ENCODE measurements at regions of chr5 and their contacts with region 1.

Region 1: GRCh38 chr5:150458819-150459557 is 9.4 kb upstream of the RPS14 start:
- DNase-seq: peak; percentile 76
- H3K4me3 Mint-ChIP-seq: no peak overlapping the region
- H3K27ac Mint-ChIP-seq: peak overlapping the region; percentile 57
- H3K4me1 Mint-ChIP-seq: peaks cover 13% of the 10 kb centered on the region
- H3K27me3 Mint-ChIP-seq: no peaks in the 10 kb centered on the region
- CTCF ChIP-seq: peak; percentile 98

Region 2: GRCh38 chr5:150497274-150497988 is 38.4 kb after region 1 on chr5:
- CTCF ChIA-PET with region 1: interaction called, 15 read pairs
- POLR2A ChIA-PET with region 1: no interaction called
- intact Hi-C with region 1: no loop called
- DNase-seq: peak; percentile 99
- H3K4me3 Mint-ChIP-seq: peak overlapping the region; percentile 70
- H3K27ac Mint-ChIP-seq: peak overlapping the region; percentile 94
- H3K4me1 Mint-ChIP-seq: peaks cover 83% of the 10 kb centered on the region
- H3K27me3 Mint-ChIP-seq: no peaks in the 10 kb centered on the region
- CTCF ChIP-seq: peak; percentile 11

Region 3: GRCh38 chr5:150523472-150524350 is 64.7 kb after region 1 on chr5:
- CTCF ChIA-PET with region 1: interaction called, 137 read pairs
- POLR2A ChIA-PET with region 1: interaction called, 8 read pairs
- intact Hi-C with region 1: loop called (anchors 1 kb)
- DNase-seq: peak; percentile 81
- H3K4me3 Mint-ChIP-seq: no peak overlapping the region
- H3K27ac Mint-ChIP-seq: no peak overlapping the region
- H3K4me1 Mint-ChIP-seq: peaks cover 43% of the 10 kb centered on the region
- H3K27me3 Mint-ChIP-seq: no peaks in the 10 kb centered on the region
- CTCF ChIP-seq: peak; percentile 85

Region 4: GRCh38 chr5:150538007-150538917 is 79.3 kb after region 1 on chr5:
- CTCF ChIA-PET with region 1: interaction called, 142 read pairs
- POLR2A ChIA-PET with region 1: interaction called, 10 read pairs
- intact Hi-C with region 1: no loop called
- DNase-seq: peak; percentile 50
- H3K4me3 Mint-ChIP-seq: no peak overlapping the region
- H3K27ac Mint-ChIP-seq: peak overlapping the region; percentile 10
- H3K4me1 Mint-ChIP-seq: peaks cover 36% of the 10 kb centered on the region
- H3K27me3 Mint-ChIP-seq: no peaks in the 10 kb centered on the region
- CTCF ChIP-seq: no peak

Region 5: DNA sequence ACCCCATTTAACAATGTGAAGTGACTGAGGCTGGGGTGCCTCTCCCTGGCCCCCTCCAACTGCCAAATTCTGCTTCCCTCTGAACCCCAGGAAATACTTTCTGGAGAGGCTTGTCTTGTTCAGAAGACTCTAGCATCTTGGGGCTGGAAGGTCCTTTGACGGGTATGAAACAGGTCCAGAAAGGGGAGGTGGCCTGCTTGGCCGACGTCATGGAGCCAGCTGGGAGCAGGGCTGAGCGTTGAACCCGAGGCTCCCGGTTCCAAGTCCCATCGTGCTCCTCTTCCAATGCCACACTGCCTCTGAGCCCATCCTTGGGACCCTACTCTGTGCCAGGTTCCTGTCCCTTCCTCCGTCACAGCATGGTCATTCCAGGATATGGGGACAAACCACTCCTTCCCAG is 95.9 kb after region 1 on chr5:
- CTCF ChIA-PET with region 1: interaction called, 142 read pairs
- POLR2A ChIA-PET with region 1: interaction called, 4 read pairs
- intact Hi-C with region 1: no loop called
- DNase-seq: no peak
- H3K4me3 Mint-ChIP-seq: no peak overlapping the region
- H3K27ac Mint-ChIP-seq: no peak overlapping the region
- H3K4me1 Mint-ChIP-seq: peaks cover 3% of the 10 kb centered on the region
- H3K27me3 Mint-ChIP-seq: no peaks in the 10 kb centered on the region
- CTCF ChIP-seq: no peak

Region 6: GRCh38 chr5:150672237-150672883 is 213.4 kb after region 1 on chr5:
- CTCF ChIA-PET with region 1: no interaction called
- POLR2A ChIA-PET with region 1: no interaction called
- intact Hi-C with region 1: no loop called
- DNase-seq: peak; percentile 65
- H3K4me3 Mint-ChIP-seq: peak overlapping the region; percentile 51
- H3K27ac Mint-ChIP-seq: no peak overlapping the region
- H3K4me1 Mint-ChIP-seq: peaks cover 14% of the 10 kb centered on the region
- H3K27me3 Mint-ChIP-seq: no peaks in the 10 kb centered on the region
- CTCF ChIP-seq: no peak

Region 7: DNA sequence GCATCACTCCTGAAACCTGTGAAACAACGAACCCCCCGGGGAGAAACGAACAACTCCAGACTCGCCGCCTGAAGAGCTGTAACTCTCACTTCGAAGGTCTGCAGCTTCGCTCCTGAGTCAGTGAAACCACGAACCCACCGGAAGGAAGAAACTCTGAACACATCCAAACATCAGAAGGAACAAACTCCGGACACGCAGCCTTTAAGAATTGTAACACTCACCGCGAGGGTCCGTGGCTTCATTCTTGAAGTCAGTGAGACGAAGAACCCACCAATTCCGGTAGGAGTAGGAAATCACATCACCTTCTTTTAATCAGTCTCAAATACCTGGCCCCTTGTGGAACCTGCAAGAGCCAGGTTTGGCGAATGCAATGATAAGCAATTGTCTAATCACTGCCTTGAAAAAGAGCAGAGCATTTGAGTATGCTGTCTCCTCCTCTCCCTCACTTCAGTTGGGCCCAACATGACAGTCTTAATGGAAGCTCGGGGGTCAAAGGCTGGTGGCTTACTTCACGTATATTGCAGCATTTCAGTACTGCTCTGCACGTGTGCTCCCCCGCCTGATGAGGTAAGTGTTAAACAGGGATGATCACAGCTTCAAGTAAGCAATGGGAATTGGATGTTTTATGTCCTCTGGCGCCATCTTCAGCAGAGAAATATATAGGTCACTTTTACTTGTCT is 387.8 kb after region 1 on chr5:
- CTCF ChIA-PET with region 1: interaction called, 14 read pairs
- POLR2A ChIA-PET with region 1: no interaction called
- intact Hi-C with region 1: loop called (anchors 1 kb)
- DNase-seq: peak; percentile 92
- H3K4me3 Mint-ChIP-seq: no peak overlapping the region
- H3K27ac Mint-ChIP-seq: no peak overlapping the region
- H3K4me1 Mint-ChIP-seq: no peaks in the 10 kb centered on the region
- H3K27me3 Mint-ChIP-seq: no peaks in the 10 kb centered on the region
- CTCF ChIP-seq: peak; percentile 85

Measured in MCF 10A (cell line).